Activated CD4-positive, alpha-beta memory T cell treated with anti-CD3 and anti-CD28 coated beads for 36 hours (primary cell): ENCODE measurements at regions of chr16 and their contacts with region 1.

Region 1: DNA sequence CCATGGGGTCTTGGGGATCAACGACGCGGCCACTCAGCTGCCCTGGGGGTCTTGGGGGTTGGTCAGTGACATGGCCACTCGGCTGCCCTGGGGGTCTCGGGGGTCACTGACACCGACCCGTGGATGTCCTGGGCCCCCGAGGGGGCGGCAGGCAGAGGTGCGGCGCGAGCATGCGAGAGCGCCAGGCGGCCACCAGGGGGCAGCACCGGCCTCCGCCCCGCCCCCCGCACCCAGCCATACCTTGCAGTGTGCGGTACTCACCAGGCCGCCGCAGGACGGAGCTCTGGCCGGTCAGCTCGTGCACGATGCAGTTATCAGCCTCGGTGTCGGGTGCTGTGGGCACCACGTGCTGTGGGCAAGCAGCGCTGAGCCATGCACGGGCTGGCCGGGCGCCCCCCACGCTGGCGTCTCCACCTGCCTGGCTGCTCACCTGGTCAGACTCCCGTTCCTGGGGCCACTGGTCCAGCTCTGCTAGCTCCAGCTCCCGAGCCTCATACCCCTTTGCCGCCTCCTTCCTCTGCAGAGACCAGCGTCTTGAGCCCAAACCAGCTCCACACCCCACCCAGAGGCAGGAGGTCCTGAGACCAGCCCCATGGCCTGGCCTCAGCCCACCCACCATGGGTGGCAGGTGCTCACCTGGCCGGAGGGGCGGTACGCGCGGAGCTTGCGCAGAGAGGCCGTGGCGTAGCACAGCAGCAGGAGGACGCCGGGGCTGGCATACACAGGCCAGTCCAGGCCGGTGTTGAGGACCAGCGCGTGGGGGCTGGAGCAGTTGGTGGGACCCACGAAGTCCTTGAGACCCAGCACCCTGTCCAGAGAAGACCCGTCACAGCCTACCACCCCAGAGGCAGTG is 31.2 kb downstream of the CTU2 start:
- DNase-seq: peak; percentile 82
- H3K4me3 Mint-ChIP-seq: no peak overlapping the region
- H3K27ac Mint-ChIP-seq: no peak overlapping the region
- H3K4me1 Mint-ChIP-seq: peaks cover 9% of the 10 kb centered on the region
- H3K27me3 Mint-ChIP-seq: no peaks in the 10 kb centered on the region

Region 2: GRCh38 chr16:88533932-88534732 is 203.4 kb before region 1 on chr16:
- CTCF ChIA-PET with region 1: no interaction called
- POLR2A ChIA-PET with region 1: no interaction called
- intact Hi-C with region 1: no loop called
- DNase-seq: peak; percentile 76
- H3K4me3 Mint-ChIP-seq: no peak overlapping the region
- H3K27ac Mint-ChIP-seq: no peak overlapping the region
- H3K4me1 Mint-ChIP-seq: peaks cover 2% of the 10 kb centered on the region
- H3K27me3 Mint-ChIP-seq: no peaks in the 10 kb centered on the region

Region 3: GRCh38 chr16:88700636-88701482 is 36.7 kb before region 1 on chr16:
- CTCF ChIA-PET with region 1: interaction called, 11 read pairs
- POLR2A ChIA-PET with region 1: no interaction called
- intact Hi-C with region 1: no loop called
- DNase-seq: peak; percentile 98
- H3K4me3 Mint-ChIP-seq: peak overlapping the region; percentile 81
- H3K27ac Mint-ChIP-seq: peak overlapping the region; percentile 91
- H3K4me1 Mint-ChIP-seq: peaks cover 64% of the 10 kb centered on the region
- H3K27me3 Mint-ChIP-seq: no peaks in the 10 kb centered on the region

Region 4: GRCh38 chr16:88714420-88715302 is 22.9 kb before region 1 on chr16:
- CTCF ChIA-PET with region 1: interaction called, 24 read pairs
- POLR2A ChIA-PET with region 1: no interaction called
- intact Hi-C with region 1: no loop called
- DNase-seq: no peak
- H3K4me3 Mint-ChIP-seq: no peak overlapping the region
- H3K27ac Mint-ChIP-seq: no peak overlapping the region
- H3K4me1 Mint-ChIP-seq: peaks cover under 1% of the 10 kb centered on the region
- H3K27me3 Mint-ChIP-seq: no peaks in the 10 kb centered on the region

Region 5: GRCh38 chr16:88768080-88768752 is 30.7 kb after region 1 on chr16:
- CTCF ChIA-PET with region 1: interaction called, 23 read pairs
- POLR2A ChIA-PET with region 1: no interaction called
- intact Hi-C with region 1: no loop called
- DNase-seq: no peak
- H3K4me3 Mint-ChIP-seq: no peak overlapping the region
- H3K27ac Mint-ChIP-seq: no peak overlapping the region
- H3K4me1 Mint-ChIP-seq: peaks cover 44% of the 10 kb centered on the region
- H3K27me3 Mint-ChIP-seq: no peaks in the 10 kb centered on the region

Region 6: DNA sequence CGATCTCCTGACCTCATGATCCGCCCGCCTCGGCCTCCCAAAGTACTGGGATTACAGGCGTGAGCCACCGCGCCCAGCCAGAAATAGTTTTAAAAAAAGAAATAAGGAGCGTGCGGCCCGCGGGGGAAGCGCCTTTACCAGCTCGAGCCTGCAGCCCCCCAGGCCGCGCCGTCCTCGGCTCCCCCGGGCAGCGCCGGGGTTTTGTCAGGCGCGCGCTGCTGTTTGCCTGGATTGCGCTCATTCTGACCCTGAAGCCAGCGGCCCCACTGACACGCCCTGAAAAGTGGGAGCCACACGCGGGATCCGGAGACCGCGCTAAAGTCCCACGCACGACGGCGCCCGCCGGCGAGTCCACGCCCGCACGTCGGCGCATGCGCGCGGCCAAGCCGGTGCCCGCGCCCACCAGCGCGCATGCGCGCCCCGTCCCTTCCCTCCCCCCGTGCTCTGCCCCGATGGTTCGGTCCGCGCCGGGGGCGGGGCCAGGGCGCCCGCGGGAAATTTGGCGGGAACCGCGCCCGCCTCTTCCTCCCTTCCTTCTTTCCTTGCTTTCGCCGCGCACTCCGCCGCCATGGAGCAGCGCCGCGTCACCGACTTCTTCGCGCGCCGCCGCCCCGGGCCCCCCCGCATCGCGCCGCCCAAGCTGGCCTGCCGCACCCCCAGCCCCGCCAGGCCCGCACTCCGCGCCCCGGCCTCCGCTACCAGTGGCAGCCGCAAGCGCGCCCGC is 65.9 kb after region 1 on chr16 and contains the start of gene CDT1:
- CTCF ChIA-PET with region 1: interaction called, 16 read pairs
- POLR2A ChIA-PET with region 1: no interaction called
- intact Hi-C with region 1: no loop called
- DNase-seq: peak; percentile 90
- H3K4me3 Mint-ChIP-seq: peak within 1 kb of the TSS; percentile 84
- H3K27ac Mint-ChIP-seq: peak within 1 kb of the TSS; percentile 91
- H3K4me1 Mint-ChIP-seq: peaks cover 27% of the 10 kb centered on the region
- H3K27me3 Mint-ChIP-seq: no peaks in the 10 kb centered on the region
- total RNA-seq, gene CDT1: 169 to 183 TPM

Region 7: DNA sequence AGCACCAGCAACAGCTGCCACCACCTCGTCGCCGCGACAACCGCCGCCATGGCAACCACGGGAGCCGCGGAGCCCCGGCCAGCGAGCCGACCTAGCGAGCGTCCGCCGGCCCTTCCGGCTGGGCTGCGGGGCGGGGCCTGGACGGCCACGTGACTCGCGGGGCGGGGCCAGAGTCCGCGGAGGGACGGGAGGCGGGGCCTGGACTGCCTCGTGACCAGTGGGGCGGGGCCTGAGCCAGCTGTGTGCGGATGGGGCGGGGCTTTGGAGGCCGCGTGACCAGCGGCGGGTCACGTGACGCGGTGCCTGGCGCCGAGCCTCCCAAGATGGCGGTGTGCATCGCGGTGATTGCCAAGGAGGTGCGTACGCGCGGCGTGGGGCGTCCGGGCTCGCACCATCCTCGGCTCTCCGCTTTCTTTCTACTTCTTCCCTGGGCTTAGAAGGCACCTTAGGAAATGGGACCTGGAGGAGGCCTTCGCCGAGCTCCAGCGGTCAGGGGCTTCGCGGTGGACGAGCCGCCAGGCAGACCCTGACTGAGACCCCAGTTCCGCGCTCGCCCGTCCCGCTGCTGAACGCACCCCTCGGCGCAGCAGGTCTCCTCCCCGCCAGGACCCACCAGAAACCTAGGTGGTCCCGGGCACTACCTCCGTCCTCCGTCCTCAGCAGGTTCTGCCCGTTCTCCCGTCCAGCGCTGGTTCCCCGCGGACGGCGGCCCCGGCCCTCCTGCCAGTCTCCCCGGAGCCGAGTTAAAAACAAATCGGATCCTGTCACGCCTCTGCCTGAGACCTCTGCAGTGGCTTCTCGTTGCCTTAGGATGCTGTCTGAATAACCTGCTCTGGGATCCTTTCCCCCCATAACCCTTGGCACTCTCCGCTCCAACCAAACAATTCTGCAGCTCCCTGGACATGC is 119.6 kb after region 1 on chr16 and contains the starts of genes GALNS and TRAPPC2L:
- CTCF ChIA-PET with region 1: interaction called, 17 read pairs
- POLR2A ChIA-PET with region 1: no interaction called
- intact Hi-C with region 1: no loop called
- DNase-seq: peak; percentile 99
- H3K4me3 Mint-ChIP-seq: peak within 1 kb of the TSS; percentile 93
- H3K27ac Mint-ChIP-seq: peak within 1 kb of the TSS; percentile 72
- H3K4me1 Mint-ChIP-seq: peaks cover 23% of the 10 kb centered on the region
- H3K27me3 Mint-ChIP-seq: no peaks in the 10 kb centered on the region
- total RNA-seq, gene GALNS: 22.0 to 24.1 TPM
- total RNA-seq, gene TRAPPC2L: 63.6 to 71.5 TPM

Region 8: DNA sequence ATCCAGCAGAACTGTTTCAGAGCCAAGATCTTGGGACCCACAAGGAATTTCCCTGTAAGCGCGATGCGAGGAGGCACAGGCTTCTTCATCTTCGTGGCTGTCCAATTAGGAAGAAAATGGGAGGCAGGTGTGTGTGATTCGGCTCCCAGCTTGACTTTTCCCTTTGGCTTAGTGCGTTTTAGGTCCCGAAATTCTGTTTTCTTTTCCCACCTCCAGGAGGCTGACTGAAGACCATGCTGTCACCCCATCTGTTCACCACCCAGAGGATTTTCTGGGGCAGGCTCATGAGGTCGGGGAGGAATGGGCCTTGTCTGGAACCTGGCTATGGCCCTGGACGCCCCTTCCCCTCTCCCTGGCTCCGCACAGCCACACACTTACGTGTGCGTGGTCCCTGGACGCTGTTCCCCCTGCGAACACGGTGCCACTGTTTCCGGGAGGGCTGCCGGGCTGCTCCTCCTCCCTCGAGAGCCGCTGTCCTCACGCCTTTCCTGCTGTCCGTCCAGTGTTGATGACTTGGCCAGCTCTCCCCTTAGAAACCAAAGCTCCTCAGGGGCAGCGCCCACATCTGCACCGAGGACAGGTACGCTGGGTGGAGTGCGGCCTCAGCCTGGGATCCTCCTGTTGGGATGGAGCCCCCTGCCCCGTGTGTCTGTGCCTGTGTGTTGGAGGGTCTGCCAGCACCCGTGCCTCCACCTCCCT is 131.6 kb after region 1 on chr16:
- CTCF ChIA-PET with region 1: no interaction called
- POLR2A ChIA-PET with region 1: no interaction called
- intact Hi-C with region 1: no loop called
- DNase-seq: no peak
- H3K4me3 Mint-ChIP-seq: no peak overlapping the region
- H3K27ac Mint-ChIP-seq: no peak overlapping the region
- H3K4me1 Mint-ChIP-seq: peaks cover 5% of the 10 kb centered on the region
- H3K27me3 Mint-ChIP-seq: peaks cover 10% of the 10 kb centered on the region

Region 9: DNA sequence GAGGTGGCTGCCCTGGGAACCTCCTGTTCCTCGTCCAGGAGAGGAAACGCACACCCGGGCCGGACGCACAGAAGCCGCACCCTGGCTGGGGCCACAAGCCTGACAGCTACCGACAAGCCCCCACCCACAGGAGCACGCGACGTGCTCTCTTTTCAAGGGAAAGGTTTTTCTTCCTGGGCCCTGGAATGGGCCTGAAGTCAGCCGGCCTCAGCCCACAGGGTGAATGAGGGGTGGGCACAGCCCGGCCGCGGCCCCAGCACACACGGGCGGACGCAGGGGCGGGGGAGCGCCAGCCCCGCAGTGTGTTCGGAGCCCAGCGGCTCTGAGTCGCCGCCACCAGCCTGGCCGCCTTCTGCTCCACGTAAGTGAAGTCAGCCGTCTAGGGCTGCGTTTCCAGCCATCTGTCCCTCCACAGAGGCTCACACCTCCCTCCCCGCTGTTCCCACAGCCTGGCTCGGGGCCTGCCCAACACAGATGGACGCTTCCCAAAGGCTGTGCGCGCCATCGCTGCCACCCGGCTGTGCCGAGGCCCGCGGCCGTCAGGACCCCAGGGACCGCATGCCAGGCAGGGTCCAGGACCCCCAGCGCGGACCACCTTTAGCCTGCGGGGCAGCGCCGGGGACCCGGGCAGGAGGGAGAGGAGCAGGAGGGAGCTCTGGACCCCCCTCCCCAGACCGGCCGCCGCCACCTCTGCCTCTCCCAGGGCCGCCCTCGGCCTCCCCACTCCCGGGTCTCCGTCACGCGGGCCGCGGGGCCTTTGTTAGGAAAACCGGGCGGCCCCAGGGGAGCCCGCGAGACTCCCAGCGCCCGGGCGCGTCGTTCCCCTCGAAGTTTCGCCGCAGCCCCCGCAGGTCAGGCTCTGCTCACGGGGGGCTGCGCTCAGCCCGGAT is 202.7 kb after region 1 on chr16:
- CTCF ChIA-PET with region 1: no interaction called
- POLR2A ChIA-PET with region 1: no interaction called
- intact Hi-C with region 1: no loop called
- DNase-seq: peak; percentile 16
- H3K4me3 Mint-ChIP-seq: no peak overlapping the region
- H3K27ac Mint-ChIP-seq: no peak overlapping the region
- H3K4me1 Mint-ChIP-seq: no peaks in the 10 kb centered on the region
- H3K27me3 Mint-ChIP-seq: peaks cover 44% of the 10 kb centered on the region